ENCODE measurements at regions of chr3 and their contacts with region 1.

Region 1: DNA sequence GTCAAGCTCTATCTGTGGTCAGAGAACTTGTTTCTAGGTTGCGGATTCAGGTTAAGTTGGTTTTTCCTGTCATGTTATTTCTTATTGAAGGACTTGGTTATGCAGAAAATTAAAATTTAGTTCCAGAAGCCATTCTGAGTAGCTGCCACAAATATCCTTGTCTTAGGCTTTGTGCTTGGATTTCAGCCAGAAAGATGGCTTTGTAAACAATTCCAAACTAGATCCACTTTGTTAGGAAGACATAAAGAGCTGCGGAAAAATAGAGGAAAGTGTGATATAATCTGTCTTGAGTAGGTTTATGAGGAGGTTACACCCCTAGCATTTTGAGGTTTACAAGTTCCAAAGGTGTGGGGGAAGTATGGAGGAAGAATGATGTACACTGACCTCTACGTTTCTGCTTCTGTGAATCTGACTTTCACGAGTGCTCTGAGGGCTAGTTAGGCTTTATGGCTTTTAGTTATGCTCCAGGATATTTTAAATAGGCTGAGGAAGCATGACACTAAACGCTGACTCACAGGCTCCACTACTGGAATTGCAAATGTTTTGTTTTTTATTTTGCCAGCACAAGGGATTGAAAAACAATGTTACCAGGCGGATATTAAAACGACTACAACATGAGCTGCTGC is 46.3 kb upstream of the UTS2B start:
- DNase-seq: peak; percentile 62
- H3K4me3 Mint-ChIP-seq: peak overlapping the region; percentile 17
- H3K27ac Mint-ChIP-seq: peak overlapping the region; percentile 69
- H3K4me1 Mint-ChIP-seq: peaks cover 7% of the 10 kb centered on the region
- H3K27me3 Mint-ChIP-seq: no peaks in the 10 kb centered on the region
- CTCF ChIP-seq: no peak

Region 2: DNA sequence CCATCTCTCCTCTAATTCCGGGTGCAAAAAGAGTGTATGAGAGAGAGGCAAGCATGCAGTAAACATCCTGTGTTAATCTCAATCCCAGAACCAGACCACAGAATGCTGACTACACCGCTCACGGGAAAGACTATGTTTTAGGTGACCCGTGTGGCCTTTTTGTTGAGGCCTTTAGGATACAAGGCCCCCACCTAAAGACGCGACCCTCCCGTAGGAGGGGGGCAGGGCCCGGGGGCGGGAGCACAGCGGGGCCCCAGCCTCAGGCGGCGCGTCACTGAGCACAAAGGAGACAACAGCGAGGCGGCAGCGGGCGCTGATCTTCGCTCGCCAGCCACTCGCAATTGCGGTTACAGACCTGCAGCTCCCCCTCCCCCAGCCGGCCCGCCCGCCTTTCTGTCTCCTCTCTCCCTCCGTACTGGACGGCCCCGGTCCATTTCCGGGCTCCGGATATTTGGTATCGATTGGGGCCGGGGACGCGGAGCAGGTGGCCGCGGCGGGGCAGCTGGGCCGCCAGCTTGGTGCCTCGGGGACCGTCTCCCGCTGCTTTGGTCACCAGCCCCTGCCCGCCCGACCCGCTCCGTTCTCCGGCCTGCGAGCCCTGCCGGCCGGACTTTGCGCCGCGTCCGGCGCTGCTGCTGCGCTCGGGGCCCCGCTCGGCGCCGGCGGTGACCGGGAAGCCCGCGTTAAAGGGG is 47.5 kb before region 1 on chr3 and contains the start of gene CCDC50:
- CTCF ChIA-PET with region 1: no interaction called
- POLR2A ChIA-PET with region 1: interaction called, 11 read pairs
- intact Hi-C with region 1: loop called (anchors 5 kb)
- DNase-seq: peak; percentile 80
- H3K4me3 Mint-ChIP-seq: peak within 1 kb of the TSS; percentile 76
- H3K27ac Mint-ChIP-seq: peak within 1 kb of the TSS; percentile 91
- H3K4me1 Mint-ChIP-seq: peaks cover 38% of the 10 kb centered on the region
- H3K27me3 Mint-ChIP-seq: no peaks in the 10 kb centered on the region
- CTCF ChIP-seq: no peak
- total RNA-seq, gene CCDC50: 100 and 115 TPM in 2 replicates

Measured in MCF 10A (cell line).